Activated naive CD4-positive, alpha-beta T cell treated with anti-CD3 and anti-CD28 coated beads for 36 hours (primary cell): ENCODE measurements at regions of chr7 and their contacts with region 1.

Region 1: GRCh38 chr7:32495298-32496176 is at the start of gene AVL9:
- DNase-seq: peak; percentile 99
- H3K4me3 Mint-ChIP-seq: peak within 1 kb of the TSS; percentile 96
- H3K27ac Mint-ChIP-seq: peak within 1 kb of the TSS; percentile 92
- H3K4me1 Mint-ChIP-seq: peaks cover 38% of the 10 kb centered on the region
- H3K27me3 Mint-ChIP-seq: no peaks in the 10 kb centered on the region
- total RNA-seq, gene AVL9: 29.6 to 38.0 TPM

Region 2: GRCh38 chr7:30504347-30505173 is 1991.0 kb before region 1 on chr7 and contains the start of gene GGCT:
- CTCF ChIA-PET with region 1: no interaction called
- intact Hi-C with region 1: loop called (anchors 10 kb)
- DNase-seq: peak; percentile 99
- H3K4me3 Mint-ChIP-seq: peak within 1 kb of the TSS; percentile 82
- H3K27ac Mint-ChIP-seq: peak within 1 kb of the TSS; percentile 85
- H3K4me1 Mint-ChIP-seq: peaks cover 38% of the 10 kb centered on the region
- H3K27me3 Mint-ChIP-seq: no peaks in the 10 kb centered on the region
- total RNA-seq, gene GGCT: 83.0 to 83.8 TPM

Region 3: DNA sequence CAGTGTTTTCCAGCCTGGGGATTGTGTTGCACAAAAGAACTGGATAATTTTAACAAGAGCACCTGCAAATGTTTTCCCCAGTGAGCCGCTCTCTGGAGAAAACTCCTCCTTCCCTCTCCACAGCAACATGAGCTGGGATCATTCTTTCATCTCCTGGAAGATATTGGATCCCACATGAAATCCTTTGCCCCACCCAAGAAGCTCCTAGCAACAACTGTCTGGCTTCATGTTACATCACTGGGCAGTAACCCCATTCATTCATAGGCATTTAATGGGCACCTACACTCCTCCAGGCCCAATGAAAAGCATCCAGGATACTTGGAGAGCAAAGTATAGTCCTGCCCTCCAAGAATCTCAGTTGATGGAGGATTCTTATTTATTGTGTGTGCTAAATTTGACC is 32.6 kb before region 1 on chr7:
- CTCF ChIA-PET with region 1: no interaction called
- intact Hi-C with region 1: no loop called
- DNase-seq: no peak
- H3K4me3 Mint-ChIP-seq: no peak overlapping the region
- H3K27ac Mint-ChIP-seq: no peak overlapping the region
- H3K4me1 Mint-ChIP-seq: no peaks in the 10 kb centered on the region
- H3K27me3 Mint-ChIP-seq: no peaks in the 10 kb centered on the region

Region 4: DNA sequence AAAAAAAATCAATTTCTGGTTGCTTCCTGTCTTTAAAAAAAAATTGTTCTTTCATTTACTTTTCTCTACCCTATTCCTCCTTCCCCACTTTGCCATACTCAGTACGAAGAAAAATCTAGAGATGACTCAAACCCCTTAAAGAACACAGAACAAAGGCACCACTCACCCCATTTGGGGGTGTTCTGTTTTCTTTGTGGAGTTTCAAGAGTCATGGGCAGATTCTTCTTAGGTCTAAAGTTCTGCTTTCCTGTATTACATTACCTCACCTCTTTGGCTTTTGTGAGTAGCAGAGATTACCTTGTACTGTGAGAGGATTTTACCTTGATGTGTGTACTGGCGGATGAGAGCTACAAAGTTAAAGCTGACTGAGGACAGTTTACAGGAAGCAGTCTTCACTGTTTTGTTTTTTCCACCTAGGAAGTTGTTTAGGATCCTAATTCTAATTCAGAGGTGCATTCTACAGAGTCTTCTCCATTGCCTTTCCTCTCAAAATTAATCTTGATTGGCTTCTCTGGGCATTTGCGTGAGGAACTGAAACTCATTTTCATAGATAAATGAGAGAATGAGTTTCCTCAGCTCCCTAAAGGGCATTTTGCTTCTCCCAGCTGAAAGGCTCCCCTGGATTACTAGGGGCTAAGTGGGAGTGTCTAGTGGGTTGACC is 20.5 kb after region 1 on chr7:
- CTCF ChIA-PET with region 1: interaction called, 3 read pairs
- intact Hi-C with region 1: loop called (anchors 1 kb)
- DNase-seq: peak; percentile 44
- H3K4me3 Mint-ChIP-seq: no peak overlapping the region
- H3K27ac Mint-ChIP-seq: peak overlapping the region; percentile 52
- H3K4me1 Mint-ChIP-seq: peaks cover 74% of the 10 kb centered on the region
- H3K27me3 Mint-ChIP-seq: no peaks in the 10 kb centered on the region

Region 5: DNA sequence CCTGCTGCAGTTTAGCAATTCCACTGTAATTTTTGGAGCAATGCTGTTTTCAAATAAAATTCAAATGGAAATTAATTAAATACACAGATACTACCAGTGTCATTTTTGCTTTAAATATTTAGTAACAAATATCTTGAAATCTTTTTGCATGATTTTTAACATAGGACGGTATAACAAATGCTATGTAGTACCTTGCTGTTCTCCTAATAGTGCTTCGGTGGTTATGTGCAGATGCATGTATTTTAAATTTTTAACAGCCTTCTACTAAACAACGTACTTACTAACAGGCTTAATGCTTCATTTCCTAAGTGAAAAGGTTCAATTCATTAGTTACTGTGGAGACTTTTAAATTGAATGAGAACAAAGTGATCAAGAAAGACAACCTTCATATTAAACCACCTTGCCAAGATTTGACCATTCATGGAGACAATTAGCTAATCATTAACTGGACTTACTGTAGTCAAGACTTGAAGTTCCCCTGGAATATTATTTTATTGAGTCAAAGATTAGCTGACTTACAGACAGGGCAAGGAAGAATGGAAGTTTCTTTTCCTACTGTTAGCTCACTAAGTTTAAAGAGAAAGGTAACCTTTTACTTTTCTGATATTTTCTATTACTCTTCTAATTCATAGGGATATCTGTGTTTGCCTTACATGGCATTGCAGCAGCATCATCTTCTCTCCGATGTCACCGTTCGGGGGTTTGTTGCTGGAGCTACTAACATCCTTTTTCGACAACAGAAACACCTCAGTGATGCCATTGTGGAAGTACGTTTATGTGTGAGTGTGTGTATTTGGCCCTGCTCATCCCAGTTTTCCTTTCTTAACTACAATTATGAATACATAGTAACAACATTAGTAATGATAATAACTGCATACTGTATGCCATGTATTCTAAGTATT is 74.1 kb after region 1 on chr7:
- CTCF ChIA-PET with region 1: no interaction called
- intact Hi-C with region 1: no loop called
- DNase-seq: no peak
- H3K4me3 Mint-ChIP-seq: no peak overlapping the region
- H3K27ac Mint-ChIP-seq: no peak overlapping the region
- H3K4me1 Mint-ChIP-seq: no peaks in the 10 kb centered on the region
- H3K27me3 Mint-ChIP-seq: no peaks in the 10 kb centered on the region

Region 6: DNA sequence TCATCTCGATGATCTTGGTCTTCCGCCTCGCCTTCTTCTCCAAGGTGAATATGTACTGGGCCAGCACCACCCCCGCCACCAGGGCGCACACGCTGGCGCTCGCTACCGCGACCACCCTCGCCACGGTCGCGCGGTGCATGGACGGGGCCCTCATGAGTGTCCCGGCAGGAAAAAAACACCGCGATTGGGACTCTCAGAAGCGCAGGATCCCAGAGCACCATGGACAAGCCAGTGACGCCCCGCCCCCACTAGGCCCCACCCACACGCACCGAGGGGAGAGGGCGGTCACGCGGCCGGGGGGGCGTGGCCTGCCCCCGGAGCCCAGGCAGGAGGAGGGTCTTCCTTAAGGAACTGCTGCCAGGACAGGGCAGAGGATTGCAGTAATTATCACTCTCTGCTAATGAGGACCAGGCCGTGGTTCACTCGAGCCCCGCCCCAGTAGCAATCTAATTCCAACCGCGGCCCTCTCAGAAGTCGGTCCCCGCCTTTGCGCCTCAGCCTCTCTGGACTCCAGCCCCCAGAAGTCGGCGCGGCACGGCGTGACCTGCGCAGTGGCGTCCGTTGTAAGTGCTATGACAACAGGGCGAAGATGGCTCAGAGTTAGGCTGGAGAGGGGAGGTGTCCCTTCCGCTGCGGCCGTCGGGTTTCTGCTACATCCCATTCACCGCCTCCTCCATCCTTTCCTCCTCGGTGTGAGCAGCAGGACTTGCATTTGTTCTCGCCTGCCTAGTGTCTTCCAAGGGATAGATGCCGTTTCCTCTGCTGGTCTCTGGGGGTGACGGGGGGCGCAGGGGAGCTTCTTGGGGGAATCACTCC is 633.7 kb after region 1 on chr7 and contains the start of gene BBS9:
- CTCF ChIA-PET with region 1: no interaction called
- intact Hi-C with region 1: loop called (anchors 1 kb)
- DNase-seq: peak; percentile 95
- H3K4me3 Mint-ChIP-seq: peak within 1 kb of the TSS; percentile 93
- H3K27ac Mint-ChIP-seq: peak within 1 kb of the TSS; percentile 72
- H3K4me1 Mint-ChIP-seq: peaks cover 21% of the 10 kb centered on the region
- H3K27me3 Mint-ChIP-seq: no peaks in the 10 kb centered on the region
- total RNA-seq, gene BBS9: 7.0 to 7.4 TPM